Activated naive CD4-positive, alpha-beta T cell treated with anti-CD3 and anti-CD28 coated beads for 36 hours (primary cell): ENCODE measurements at regions of chr4 and their contacts with region 1.

Region 1: GRCh38 chr4:102620697-102621497 is 119.7 kb downstream of the NFKB1 start:
- DNase-seq: peak; percentile 30
- H3K4me3 Mint-ChIP-seq: no peak overlapping the region
- H3K27ac Mint-ChIP-seq: no peak overlapping the region
- H3K4me1 Mint-ChIP-seq: peaks cover 52% of the 10 kb centered on the region
- H3K27me3 Mint-ChIP-seq: no peaks in the 10 kb centered on the region

Region 2: GRCh38 chr4:102255454-102255853 is 365.4 kb before region 1 on chr4:
- CTCF ChIA-PET with region 1: interaction called, 3 read pairs
- intact Hi-C with region 1: loop called (anchors 1 kb)
- DNase-seq: no peak
- H3K4me3 Mint-ChIP-seq: no peak overlapping the region
- H3K27ac Mint-ChIP-seq: no peak overlapping the region
- H3K4me1 Mint-ChIP-seq: no peaks in the 10 kb centered on the region
- H3K27me3 Mint-ChIP-seq: no peaks in the 10 kb centered on the region

Region 3: GRCh38 chr4:102263011-102263787 is 357.7 kb before region 1 on chr4:
- CTCF ChIA-PET with region 1: no interaction called
- intact Hi-C with region 1: loop called (anchors 2 kb)
- DNase-seq: peak; percentile 22
- H3K4me3 Mint-ChIP-seq: no peak overlapping the region
- H3K27ac Mint-ChIP-seq: no peak overlapping the region
- H3K4me1 Mint-ChIP-seq: peaks cover 3% of the 10 kb centered on the region
- H3K27me3 Mint-ChIP-seq: no peaks in the 10 kb centered on the region

Region 4: DNA sequence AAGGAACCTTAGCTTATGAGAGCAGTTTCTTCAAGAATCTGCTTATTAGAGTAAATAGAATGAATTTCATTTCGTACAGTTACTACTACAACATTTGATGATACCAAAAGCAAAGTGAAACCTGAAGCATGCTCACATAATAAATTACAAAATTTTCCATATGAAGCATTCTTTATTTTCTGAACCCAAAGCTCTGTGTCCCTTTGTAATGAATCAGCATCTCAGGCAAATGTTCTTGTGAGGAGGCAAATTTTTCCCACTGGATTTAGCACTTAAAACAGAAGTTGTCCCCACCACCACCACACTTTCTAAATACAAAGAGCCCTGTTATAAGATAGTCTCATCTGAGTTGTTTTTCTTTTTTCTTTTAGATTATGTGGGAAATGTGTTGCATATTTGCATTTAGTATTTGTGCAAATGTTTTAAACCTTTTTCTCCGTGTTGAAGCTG is 190.4 kb before region 1 on chr4:
- CTCF ChIA-PET with region 1: interaction called, 8 read pairs
- intact Hi-C with region 1: loop called (anchors 1 kb)
- DNase-seq: no peak
- H3K4me3 Mint-ChIP-seq: peak overlapping the region; percentile 82
- H3K27ac Mint-ChIP-seq: peak overlapping the region; percentile 81
- H3K4me1 Mint-ChIP-seq: peaks cover 8% of the 10 kb centered on the region
- H3K27me3 Mint-ChIP-seq: peaks cover 5% of the 10 kb centered on the region

Region 5: DNA sequence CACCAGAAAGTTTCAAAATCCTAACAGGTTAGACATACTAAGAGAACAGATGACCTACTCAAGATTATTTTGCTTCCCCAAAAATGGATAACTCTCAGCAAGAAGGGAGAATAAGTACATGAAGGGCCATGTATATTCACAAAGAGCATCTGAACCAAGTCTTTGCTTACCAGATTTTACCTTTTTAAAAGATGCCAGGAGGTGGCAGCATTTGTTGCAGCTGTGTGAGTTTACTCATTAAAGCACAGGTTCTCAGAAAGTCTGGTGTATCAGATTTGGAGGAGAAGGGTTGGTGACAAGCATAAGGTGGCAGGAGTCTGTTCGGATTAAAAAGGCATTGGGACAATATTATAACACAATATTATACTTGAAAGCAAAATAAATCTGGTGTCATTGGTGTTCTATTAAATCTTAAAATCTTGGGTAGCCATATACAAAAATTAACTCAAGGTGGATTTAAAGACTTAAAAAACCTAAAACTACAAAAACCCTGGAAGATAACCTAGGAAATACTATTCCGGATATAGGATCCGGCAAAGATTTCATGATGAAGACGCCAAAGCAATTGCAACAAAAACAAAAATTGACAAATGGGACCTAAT is 171.0 kb before region 1 on chr4:
- CTCF ChIA-PET with region 1: interaction called, 8 read pairs
- intact Hi-C with region 1: loop called (anchors 1 kb)
- DNase-seq: peak; percentile 76
- H3K4me3 Mint-ChIP-seq: no peak overlapping the region
- H3K27ac Mint-ChIP-seq: no peak overlapping the region
- H3K4me1 Mint-ChIP-seq: peaks cover 18% of the 10 kb centered on the region
- H3K27me3 Mint-ChIP-seq: no peaks in the 10 kb centered on the region

Region 6: GRCh38 chr4:102483120-102483519 is 137.8 kb before region 1 on chr4:
- CTCF ChIA-PET with region 1: no interaction called
- intact Hi-C with region 1: no loop called
- DNase-seq: no peak
- H3K4me3 Mint-ChIP-seq: no peak overlapping the region
- H3K27ac Mint-ChIP-seq: no peak overlapping the region
- H3K4me1 Mint-ChIP-seq: peaks cover 4% of the 10 kb centered on the region
- H3K27me3 Mint-ChIP-seq: no peaks in the 10 kb centered on the region

Region 7: GRCh38 chr4:102663073-102663472 is 42.2 kb after region 1 on chr4:
- CTCF ChIA-PET with region 1: no interaction called
- intact Hi-C with region 1: no loop called
- DNase-seq: no peak
- H3K4me3 Mint-ChIP-seq: no peak overlapping the region
- H3K27ac Mint-ChIP-seq: no peak overlapping the region
- H3K4me1 Mint-ChIP-seq: no peaks in the 10 kb centered on the region
- H3K27me3 Mint-ChIP-seq: no peaks in the 10 kb centered on the region

Region 8: DNA sequence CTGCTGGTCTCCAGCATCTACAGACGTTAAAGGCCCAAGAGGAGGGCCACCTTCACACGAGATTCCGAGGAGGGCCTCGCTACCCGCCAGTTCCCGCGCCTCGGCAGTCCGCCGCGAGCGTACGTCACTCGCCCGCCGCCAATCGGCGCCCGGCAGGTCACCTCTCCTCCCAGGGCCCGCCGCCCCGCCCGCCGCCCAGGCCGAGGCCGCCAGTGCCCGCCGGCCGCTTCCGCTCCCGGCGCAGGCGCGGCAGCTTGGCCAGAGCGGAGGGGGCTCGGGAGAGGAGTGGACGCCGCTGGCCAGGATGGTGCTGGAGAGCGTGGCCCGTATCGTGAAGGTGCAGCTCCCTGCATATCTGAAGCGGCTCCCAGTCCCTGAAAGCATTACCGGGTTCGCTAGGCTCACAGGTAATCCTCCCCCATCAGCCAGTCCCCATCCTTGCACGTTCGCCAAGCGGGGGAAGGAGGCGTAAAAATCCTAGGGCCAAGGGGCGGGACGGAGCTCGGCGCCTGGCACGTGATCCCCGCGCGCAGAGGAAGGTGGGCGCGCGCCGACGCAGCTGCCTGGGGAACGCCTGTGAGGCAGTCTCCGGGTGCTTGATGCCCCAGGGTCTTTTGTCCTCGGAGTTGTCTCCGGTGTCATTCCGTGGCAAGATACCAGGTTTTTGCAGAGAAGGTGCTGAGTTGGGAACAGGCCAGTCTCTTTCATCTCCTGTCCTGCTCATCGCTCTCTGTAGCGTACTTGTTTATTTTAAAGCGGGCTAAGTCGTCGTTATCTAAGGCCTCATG is 248.1 kb after region 1 on chr4 and contains the start of gene CISD2:
- CTCF ChIA-PET with region 1: no interaction called
- intact Hi-C with region 1: no loop called
- DNase-seq: peak; percentile 95
- H3K4me3 Mint-ChIP-seq: peak within 1 kb of the TSS; percentile 94
- H3K27ac Mint-ChIP-seq: peak within 1 kb of the TSS; percentile 97
- H3K4me1 Mint-ChIP-seq: peaks cover 51% of the 10 kb centered on the region
- H3K27me3 Mint-ChIP-seq: no peaks in the 10 kb centered on the region
- total RNA-seq, gene CISD2: 25.1 to 25.7 TPM

Region 9: GRCh38 chr4:103008875-103009729 is 388.2 kb after region 1 on chr4:
- CTCF ChIA-PET with region 1: interaction called, 5 read pairs
- intact Hi-C with region 1: loop called (anchors 1 kb)
- DNase-seq: peak; percentile 22
- H3K4me3 Mint-ChIP-seq: no peak overlapping the region
- H3K27ac Mint-ChIP-seq: no peak overlapping the region
- H3K4me1 Mint-ChIP-seq: no peaks in the 10 kb centered on the region
- H3K27me3 Mint-ChIP-seq: no peaks in the 10 kb centered on the region

Region 10: DNA sequence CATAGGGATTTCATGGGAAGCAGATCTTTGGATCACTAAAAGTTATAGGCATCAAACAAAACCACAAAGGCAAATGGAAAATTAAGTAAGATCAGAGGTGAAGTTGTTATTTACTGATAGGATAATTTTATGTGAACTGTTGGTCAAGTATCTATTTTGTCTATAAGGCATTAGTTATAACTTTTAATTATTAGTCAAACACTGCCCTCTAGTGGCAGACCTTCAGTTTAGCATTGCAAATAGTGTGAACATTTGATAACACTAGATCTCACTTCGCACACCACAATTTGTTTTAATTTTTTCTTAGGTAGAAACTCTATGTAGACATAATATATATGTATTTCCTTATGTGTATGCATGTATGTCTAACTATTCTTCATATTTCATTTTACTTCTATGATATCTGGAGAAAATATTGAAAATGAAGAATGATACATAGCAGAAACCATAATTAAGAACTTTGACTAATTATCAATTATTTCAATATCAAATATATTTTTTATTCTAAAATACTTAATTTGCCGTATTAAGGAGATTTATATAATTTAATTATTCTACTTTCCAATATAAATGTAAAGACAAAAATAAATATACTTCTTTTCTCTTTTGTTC is 1313.4 kb after region 1 on chr4:
- CTCF ChIA-PET with region 1: no interaction called
- intact Hi-C with region 1: loop called (anchors 10 kb)
- DNase-seq: peak; percentile 30
- H3K4me3 Mint-ChIP-seq: no peak overlapping the region
- H3K27ac Mint-ChIP-seq: no peak overlapping the region
- H3K4me1 Mint-ChIP-seq: no peaks in the 10 kb centered on the region
- H3K27me3 Mint-ChIP-seq: no peaks in the 10 kb centered on the region